Esophagus squamous epithelium (tissue), 5 donors: ENCODE measurements at regions of chr21 and their contacts with region 1.

Region 1: DNA sequence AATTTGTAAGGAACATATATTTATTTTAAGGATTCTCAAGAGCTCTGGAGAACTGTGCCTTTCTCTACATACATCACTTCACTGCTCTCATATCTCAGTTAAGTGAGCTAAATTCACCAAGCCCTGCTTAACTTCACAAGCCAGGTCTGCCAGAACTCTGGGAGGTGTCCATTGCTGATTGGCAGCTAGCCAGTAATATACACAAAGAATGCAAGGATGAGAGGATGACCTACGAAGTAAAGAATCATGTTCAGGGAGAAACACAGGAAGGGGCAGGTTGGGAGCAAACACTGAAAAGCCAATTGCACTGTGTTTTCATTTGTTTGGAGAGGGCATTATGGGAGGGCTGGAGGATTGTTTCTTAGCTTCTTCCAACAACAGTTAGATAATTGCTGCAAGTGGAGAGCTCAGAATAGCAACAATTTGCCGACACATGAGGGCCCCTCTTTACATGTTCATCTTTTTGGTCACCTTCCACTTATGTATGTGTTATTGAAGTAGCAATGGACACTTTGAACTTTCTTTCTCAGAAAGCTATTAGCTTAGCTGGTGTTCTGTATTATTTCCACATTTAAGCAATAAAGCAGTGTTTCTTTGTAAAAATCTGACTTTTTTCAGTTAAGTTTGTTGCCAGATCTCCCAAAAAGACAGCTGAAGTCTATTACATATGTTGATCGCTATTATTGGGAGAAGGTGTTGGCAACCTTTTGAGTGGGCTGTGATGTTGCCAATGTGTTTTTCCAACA is 254.8 kb downstream of the LTN1 start:
- DNase-seq: no peak
- H3K4me3 ChIP-seq: no peak overlapping the region
- H3K27ac ChIP-seq: no peak overlapping the region
- H3K4me1 ChIP-seq: peaks cover 0 to 39% (median 7%) of the 10 kb centered on the region in 3 donors
- H3K27me3 ChIP-seq: no peaks in the 10 kb centered on the region
- CTCF ChIP-seq: no peak
- POLR2A ChIP-seq: no peak

Region 2: GRCh38 chr21:28516991-28517592 is 220.8 kb before region 1 on chr21:
- intact Hi-C with region 1: loop called (anchors 10 kb)
- DNase-seq: peak; percentile 1
- H3K4me3 ChIP-seq: no peak overlapping the region
- H3K27ac ChIP-seq: no peak overlapping the region
- H3K4me1 ChIP-seq: peaks cover 0 to 16% (median 2%) of the 10 kb centered on the region in 3 donors
- H3K27me3 ChIP-seq: no peaks in the 10 kb centered on the region
- CTCF ChIP-seq: peak in 5 of 6 experiments; percentile 47 to 73 (median 59)
- POLR2A ChIP-seq: no peak